Activated naive CD4-positive, alpha-beta T cell treated with anti-CD3 and anti-CD28 coated beads for 36 hours (primary cell): ENCODE measurements at regions of chr10 and their contacts with region 1.

Region 1: DNA sequence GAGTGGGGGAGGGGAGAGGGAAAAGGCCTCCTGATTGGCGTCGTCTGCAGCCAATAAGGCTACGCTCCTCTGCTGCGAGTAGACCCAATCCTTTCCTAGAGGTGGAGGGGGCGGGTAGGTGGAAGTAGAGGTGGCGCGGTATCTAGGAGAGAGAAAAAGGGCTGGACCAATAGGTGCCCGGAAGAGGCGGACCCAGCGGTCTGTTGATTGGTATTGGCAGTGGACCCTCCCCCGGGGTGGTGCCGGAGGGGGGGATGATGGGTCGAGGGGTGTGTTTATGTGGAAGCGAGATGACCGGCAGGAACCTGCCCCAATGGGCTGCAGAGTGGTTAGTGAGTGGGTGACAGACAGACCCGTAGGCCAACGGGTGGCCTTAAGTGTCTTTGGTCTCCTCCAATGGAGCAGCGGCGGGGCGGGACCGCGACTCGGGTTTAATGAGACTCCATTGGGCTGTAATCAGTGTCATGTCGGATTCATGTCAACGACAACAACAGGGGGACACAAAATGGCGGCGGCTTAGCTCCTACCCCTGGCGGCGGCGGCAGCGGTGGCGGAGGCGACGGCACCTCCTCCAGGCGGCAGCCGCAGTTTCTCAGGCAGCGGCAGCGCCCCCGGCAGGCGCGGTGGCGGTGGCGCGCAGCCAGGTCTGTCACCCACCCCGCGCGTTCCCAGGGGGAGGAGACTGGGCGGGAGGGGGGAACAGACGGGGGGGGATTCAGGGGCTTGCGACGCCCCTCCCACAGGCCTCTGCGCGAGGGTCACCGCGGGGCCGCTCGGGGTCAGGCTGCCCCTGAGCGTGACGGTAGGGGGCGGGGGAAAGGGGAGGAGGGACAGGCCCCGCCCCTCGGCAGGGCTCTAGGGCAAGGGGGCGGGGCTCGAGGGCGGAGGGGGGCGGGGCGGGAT is at the start of gene KAT6B:
- DNase-seq: peak; percentile 100
- H3K4me3 Mint-ChIP-seq: peak within 1 kb of the TSS; percentile 83
- H3K27ac Mint-ChIP-seq: peak within 1 kb of the TSS; percentile 93
- H3K4me1 Mint-ChIP-seq: peaks cover 55% of the 10 kb centered on the region
- H3K27me3 Mint-ChIP-seq: no peaks in the 10 kb centered on the region
- total RNA-seq, gene KAT6B: 17.3 to 17.9 TPM

Region 2: GRCh38 chr10:74151056-74151878 is 675.1 kb before region 1 on chr10 and contains the start of gene ADK:
- CTCF ChIA-PET with region 1: no interaction called
- intact Hi-C with region 1: loop called (anchors 1 kb)
- DNase-seq: peak; percentile 100
- H3K4me3 Mint-ChIP-seq: no peak within 1 kb of the TSS
- H3K27ac Mint-ChIP-seq: peak within 1 kb of the TSS; percentile 33
- H3K4me1 Mint-ChIP-seq: peaks cover 31% of the 10 kb centered on the region
- H3K27me3 Mint-ChIP-seq: no peaks in the 10 kb centered on the region
- total RNA-seq, gene ADK: 43.4 to 43.9 TPM

Region 3: DNA sequence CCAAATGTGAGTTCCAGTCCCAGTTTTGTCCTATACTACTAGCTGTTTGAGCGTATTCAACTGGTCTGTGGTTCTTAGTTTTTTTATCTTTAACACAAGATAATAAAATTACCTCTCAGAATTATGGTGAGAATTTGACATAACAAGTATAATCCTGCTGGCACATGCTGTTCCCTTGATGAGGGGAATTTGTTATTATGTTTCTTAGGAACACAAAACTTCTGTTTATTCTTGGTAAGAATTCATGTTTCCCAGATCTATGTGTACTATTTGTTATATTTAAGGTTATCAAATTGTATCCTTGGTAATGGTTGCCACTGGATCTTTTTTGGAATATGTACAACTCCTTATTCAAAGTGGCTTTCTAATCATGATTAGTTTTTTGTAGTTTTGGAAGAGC is 339.7 kb before region 1 on chr10:
- CTCF ChIA-PET with region 1: no interaction called
- intact Hi-C with region 1: no loop called
- DNase-seq: no peak
- H3K4me3 Mint-ChIP-seq: no peak overlapping the region
- H3K27ac Mint-ChIP-seq: no peak overlapping the region
- H3K4me1 Mint-ChIP-seq: peaks cover 1% of the 10 kb centered on the region
- H3K27me3 Mint-ChIP-seq: no peaks in the 10 kb centered on the region

Region 4: DNA sequence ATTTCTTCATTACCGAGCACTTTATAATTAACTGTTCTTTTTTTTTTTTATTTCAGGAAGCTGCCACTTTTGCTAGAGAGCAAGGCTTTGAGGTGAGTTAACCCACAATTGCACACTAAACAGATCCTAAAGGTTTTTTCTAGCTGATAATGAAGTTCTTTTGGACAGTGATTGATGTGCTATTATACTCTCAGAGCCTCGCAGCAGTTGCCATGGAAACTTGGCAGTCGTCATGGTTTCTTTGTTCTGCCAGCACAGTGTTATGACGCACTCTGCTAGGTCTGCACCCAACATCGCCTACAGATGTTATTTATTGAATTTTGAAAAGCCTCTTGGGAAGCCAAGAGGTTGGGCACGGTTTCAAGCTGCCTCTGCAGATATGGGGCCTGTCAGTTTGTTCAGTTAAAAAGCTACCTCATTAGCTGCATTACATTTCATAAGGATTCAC is 237.1 kb before region 1 on chr10:
- CTCF ChIA-PET with region 1: no interaction called
- intact Hi-C with region 1: loop called (anchors 1 kb)
- DNase-seq: peak; percentile 95
- H3K4me3 Mint-ChIP-seq: peak overlapping the region; percentile 27
- H3K27ac Mint-ChIP-seq: peak overlapping the region; percentile 68
- H3K4me1 Mint-ChIP-seq: peaks cover 47% of the 10 kb centered on the region
- H3K27me3 Mint-ChIP-seq: no peaks in the 10 kb centered on the region

Region 5: DNA sequence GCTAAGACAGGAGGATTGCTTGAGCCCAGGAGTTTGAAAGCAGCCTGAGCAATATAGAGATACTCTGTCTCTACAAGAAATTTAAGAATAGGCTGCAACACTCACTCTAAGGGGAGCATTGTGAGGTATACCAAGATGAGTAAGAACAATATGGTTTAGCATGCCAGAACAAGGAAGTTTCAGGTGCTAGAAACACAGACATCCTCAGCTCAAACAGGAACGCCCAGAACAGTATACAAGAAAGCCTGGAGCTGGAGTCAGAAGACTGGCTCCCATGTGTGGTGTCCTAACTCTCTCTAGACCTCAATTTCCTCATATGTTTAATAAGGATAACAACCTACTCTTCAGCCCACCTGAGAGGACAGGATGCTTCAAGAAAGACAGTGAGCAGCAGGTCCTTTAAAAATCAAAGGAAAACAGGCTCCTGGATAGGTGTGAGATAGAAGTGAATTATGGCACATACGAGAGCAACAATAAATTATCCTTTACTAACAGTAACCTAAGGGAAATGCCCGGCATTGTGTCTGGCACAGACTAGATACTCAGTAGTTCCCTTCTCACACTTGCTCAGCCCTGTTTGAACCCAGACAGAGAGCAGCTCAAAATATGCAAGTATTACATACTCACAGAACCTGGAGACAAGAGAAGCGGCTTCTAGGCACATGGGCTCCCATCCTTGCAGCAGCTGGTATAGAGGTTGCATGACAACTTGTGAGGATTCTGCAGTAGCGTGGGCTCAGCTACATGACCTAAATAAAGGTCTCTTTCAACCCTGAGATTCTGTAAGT is 45.4 kb after region 1 on chr10:
- CTCF ChIA-PET with region 1: interaction called, 3 read pairs
- intact Hi-C with region 1: loop called (anchors 1 kb)
- DNase-seq: peak; percentile 53
- H3K4me3 Mint-ChIP-seq: peak overlapping the region; percentile 62
- H3K27ac Mint-ChIP-seq: peak overlapping the region; percentile 73
- H3K4me1 Mint-ChIP-seq: peaks cover 61% of the 10 kb centered on the region
- H3K27me3 Mint-ChIP-seq: no peaks in the 10 kb centered on the region

Region 6: DNA sequence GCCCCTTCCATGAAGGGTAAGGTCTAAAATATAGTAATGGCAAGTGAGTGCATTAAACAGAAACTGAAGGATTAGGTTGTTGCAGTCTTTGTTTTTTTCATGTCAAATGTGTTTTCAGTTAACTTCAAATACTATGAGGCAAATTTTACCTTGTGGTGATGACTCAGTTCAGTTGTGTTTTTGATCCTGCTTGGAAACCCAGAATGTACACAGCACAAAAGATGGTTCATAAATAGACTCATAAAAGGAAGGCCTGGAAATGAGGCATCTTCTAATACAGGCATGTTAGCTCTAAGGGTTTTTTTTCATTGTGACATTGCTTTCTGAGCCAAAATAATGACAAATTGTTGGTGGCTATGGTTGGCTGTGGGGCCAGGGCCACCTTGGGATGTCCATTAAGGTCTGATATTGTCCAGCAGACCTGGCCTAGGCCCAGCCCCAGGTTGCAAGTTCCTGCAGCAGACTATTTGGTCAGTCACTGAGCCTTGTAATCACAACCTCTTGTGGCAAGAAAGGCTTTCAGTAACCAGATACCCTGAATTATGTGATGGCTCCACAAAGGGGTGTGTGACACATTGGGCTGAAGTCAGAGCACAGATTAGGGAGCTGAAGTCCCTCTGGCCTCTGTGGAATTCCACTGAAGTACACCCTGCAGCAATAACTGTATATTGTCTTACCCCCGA is 216.0 kb after region 1 on chr10:
- CTCF ChIA-PET with region 1: no interaction called
- intact Hi-C with region 1: loop called (anchors 1 kb)
- DNase-seq: peak; percentile 30
- H3K4me3 Mint-ChIP-seq: peak overlapping the region; percentile 20
- H3K27ac Mint-ChIP-seq: peak overlapping the region; percentile 87
- H3K4me1 Mint-ChIP-seq: peaks cover 45% of the 10 kb centered on the region
- H3K27me3 Mint-ChIP-seq: peaks cover 7% of the 10 kb centered on the region

Region 7: GRCh38 chr10:75294866-75295701 is 468.7 kb after region 1 on chr10:
- CTCF ChIA-PET with region 1: no interaction called
- intact Hi-C with region 1: loop called (anchors 1 kb)
- DNase-seq: peak; percentile 93
- H3K4me3 Mint-ChIP-seq: peak overlapping the region; percentile 57
- H3K27ac Mint-ChIP-seq: no peak overlapping the region
- H3K4me1 Mint-ChIP-seq: peaks cover 5% of the 10 kb centered on the region
- H3K27me3 Mint-ChIP-seq: peaks cover 4% of the 10 kb centered on the region